ENCODE measurements at regions of chr17 and their contacts with region 1.

Region 1: DNA sequence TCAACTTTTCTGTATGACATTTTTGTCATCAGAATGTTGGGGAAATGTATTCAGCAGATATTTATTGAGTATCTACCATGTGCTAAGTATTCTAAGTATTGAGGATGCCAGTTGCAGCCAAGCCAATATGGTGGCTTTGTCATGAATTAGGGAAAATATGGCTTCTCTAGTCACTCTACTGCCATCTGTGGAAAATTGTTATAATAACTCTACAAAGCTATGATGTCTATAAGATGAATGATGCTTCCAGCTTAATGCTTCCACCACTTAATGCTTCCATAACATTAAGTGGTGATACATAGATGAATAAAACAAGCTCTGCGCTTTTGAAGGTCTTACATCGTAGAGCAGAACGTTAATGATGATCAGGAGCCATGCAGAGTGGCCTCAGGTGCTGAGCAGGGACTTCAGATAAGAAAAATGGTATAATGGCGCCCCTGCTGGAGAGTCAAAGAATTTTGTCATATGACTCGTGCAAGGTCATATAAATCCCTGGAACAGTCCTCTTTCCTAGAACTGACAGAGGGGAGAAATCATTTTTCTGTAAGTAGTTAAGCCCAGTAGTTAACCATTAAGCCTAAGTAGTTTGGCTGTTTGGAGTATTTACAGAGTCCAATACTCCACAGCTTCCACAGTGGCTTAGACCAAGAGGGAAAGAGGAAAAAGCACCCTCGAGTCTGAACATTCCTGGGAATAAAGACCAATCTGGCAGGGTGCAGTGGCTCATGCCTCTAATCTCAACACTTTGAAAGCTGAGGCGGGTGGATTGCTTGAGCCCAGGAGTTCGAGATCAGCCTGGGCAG is 2.7 kb upstream of the TMIGD1 start:
- DNase-seq: no peak
- H3K4me3 ChIP-seq: no peak overlapping the region
- H3K27me3 ChIP-seq: no peaks in the 10 kb centered on the region
- CTCF ChIP-seq: peak; percentile 40; the same call in 1 of the 2 replicates

Region 2: DNA sequence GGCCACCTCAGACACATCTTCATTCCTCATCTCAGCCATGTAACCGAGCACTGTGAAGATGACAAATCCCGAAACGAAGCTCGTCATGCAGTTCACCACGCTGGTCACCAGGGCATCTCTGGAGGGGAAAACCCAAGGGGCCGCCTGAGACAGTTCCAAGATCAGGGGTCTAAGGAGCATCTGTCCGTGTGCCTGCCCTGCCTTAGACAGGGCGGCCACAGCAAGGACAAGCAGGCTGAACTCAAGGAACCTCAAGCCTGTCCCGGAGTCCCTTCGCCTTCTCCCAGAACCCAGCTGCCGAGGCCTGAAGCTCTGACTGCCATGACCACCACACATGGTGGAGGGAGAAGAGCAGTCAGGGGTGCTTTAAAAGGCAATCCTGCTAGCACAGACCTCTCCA is 123.8 kb before region 1 on chr17:
- CTCF ChIA-PET with region 1: no interaction called
- POLR2A ChIA-PET with region 1: no interaction called
- DNase-seq: no peak
- H3K4me3 ChIP-seq: no peak overlapping the region
- H3K27me3 ChIP-seq: peaks cover 8% of the 10 kb centered on the region
- CTCF ChIP-seq: no peak

Region 3: GRCh38 chr17:30235386-30236296 is 100.9 kb before region 1 on chr17 and contains the start of gene SLC6A4:
- CTCF ChIA-PET with region 1: no interaction called
- POLR2A ChIA-PET with region 1: no interaction called
- DNase-seq: no peak
- H3K4me3 ChIP-seq: peak within 1 kb of the TSS; percentile 40
- H3K27me3 ChIP-seq: peaks cover 35% of the 10 kb centered on the region
- CTCF ChIP-seq: no peak
- polyA plus RNA-seq, gene SLC6A4: not detected in 2 replicates

Region 4: DNA sequence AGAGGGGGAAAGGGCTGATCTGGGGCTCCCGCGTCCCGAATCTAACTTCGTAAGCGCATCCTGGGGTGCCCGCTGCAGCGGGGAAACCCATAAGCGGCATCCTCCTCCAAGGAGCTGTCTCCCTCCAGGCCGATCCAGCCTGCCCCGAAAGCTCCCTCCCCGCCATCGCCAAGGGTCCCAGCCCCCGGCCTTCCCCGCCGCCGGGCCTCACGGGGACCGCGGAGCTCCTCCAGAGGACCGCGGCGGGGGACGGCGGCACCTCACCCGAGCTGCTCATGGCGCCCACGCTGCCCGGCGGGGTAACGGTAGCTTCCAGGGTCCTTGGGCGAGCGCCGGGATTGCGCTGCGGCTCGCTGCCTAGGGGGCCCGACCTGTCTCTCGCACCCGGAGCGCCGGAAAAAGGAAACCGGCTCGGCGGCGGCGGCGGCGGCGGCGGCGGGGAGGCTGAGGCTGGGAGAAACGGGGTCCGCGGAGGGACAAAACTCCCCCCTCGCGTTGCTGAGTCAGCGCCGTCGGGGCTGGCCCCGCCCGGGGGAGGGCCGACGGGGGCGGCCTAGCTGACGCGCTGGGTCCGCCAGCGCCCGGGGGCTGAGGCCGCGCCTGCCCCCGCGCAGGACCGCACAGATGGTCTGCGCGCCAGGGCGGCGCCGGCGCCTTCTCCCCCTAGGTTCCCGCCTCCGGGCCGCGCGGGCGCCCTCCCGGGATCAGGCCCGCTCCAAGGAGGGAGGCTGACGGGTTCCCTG is 44.9 kb before region 1 on chr17 and contains the start of gene BLMH:
- CTCF ChIA-PET with region 1: interaction called, 11 read pairs
- POLR2A ChIA-PET with region 1: no interaction called
- DNase-seq: peak; percentile 25
- H3K4me3 ChIP-seq: peak within 1 kb of the TSS; percentile 62
- H3K27me3 ChIP-seq: no peaks in the 10 kb centered on the region
- CTCF ChIP-seq: no peak
- polyA plus RNA-seq, gene BLMH: 10.7 and 13.9 TPM in 2 replicates

Region 5: GRCh38 chr17:30323895-30324319 is 12.7 kb before region 1 on chr17:
- CTCF ChIA-PET with region 1: interaction called, 22 read pairs
- POLR2A ChIA-PET with region 1: no interaction called
- DNase-seq: no peak
- H3K4me3 ChIP-seq: no peak overlapping the region
- H3K27me3 ChIP-seq: peaks cover 2% of the 10 kb centered on the region
- CTCF ChIP-seq: no peak

Region 6: DNA sequence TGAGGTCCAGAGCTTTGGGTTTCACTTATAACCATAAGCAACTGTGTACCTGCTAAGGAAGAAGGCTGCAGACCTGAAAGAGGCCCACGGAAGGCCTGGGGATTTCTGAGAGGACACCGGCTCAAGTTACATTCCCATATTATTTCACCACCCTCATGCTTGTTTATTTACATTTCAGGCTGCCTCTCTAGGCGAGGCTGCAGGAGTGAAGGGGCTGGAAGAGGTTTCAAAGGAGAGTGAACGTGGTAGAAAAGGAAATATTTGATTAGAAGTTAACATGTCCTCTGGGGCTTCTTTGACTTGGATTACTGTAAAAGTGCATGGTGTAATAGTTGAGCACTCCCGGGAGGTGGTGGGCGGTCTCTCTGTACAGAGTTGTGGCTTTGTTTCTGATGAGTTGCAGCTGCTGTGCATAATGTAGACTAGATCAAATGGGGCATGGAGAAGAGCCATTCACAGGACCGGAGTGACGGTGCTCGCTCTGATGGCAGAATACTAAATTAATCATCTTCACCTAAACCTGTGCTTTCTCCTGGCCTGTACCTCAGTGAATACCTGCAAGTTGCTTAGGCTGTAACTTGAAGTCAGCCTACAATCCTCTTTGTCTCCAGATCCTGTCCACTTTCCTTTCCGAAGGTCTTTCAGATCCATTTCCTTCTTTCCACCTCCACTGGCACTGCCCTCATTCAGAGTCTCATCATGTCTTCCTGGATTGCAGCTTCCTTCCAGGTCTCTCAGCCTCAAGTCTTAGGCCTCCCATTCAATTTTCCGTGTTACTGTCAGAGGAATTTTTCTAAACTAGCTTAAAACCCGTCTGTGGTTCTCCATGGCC is 40.3 kb after region 1 on chr17:
- CTCF ChIA-PET with region 1: interaction called, 13 read pairs
- POLR2A ChIA-PET with region 1: no interaction called
- DNase-seq: peak; percentile 31
- H3K4me3 ChIP-seq: no peak overlapping the region
- H3K27me3 ChIP-seq: no peaks in the 10 kb centered on the region
- CTCF ChIP-seq: no peak

Measured in BJ (cell line).